Activated B cell treated with CpG ODN at 0.5 μM for 24 hours (primary cell): ENCODE measurements at regions of chr18 and their contacts with region 1.

Region 1: DNA sequence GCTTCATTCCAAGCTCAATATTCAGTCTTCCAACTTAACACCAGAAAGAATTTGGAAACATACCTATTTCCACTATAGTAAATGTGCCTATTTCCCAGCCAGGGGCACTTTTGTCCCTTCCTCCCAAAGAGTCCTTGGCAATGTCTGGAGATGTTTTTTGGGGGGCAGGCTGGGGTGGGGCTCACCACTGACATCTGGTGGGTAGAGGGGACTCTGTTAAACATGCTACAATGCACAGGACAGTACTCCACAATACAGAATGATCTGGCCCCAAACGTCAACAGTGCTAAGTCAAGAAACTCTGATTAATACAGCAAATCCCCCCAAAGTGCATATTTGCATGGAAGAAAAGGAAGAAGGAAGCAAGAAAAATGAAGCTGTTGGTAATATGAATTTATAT is 61.7 kb downstream of the SMIM21 start:
- DNase-seq: no peak
- ATAC-seq: no peak
- H3K4me3 Mint-ChIP-seq: no peak overlapping the region
- H3K27ac Mint-ChIP-seq: no peak overlapping the region
- H3K4me1 Mint-ChIP-seq: no peaks in the 10 kb centered on the region
- H3K27me3 Mint-ChIP-seq: no peaks in the 10 kb centered on the region
- CTCF ChIP-seq: no peak

Region 2: GRCh38 chr18:74896390-74896991 is 469.3 kb before region 1 on chr18:
- CTCF ChIA-PET with region 1: no interaction called
- POLR2A ChIA-PET with region 1: no interaction called
- intact Hi-C with region 1: loop called (anchors 2 kb)
- DNase-seq: no peak
- ATAC-seq: peak; percentile 31
- H3K4me3 Mint-ChIP-seq: no peak overlapping the region
- H3K27ac Mint-ChIP-seq: no peak overlapping the region
- H3K4me1 Mint-ChIP-seq: no peaks in the 10 kb centered on the region
- H3K27me3 Mint-ChIP-seq: no peaks in the 10 kb centered on the region
- CTCF ChIP-seq: no peak

Region 3: GRCh38 chr18:75173125-75173432 is 192.8 kb before region 1 on chr18:
- CTCF ChIA-PET with region 1: interaction called, 3 read pairs
- POLR2A ChIA-PET with region 1: no interaction called
- intact Hi-C with region 1: loop called (anchors 2 kb)
- DNase-seq: no peak
- ATAC-seq: peak; percentile 89
- H3K4me3 Mint-ChIP-seq: no peak overlapping the region
- H3K27ac Mint-ChIP-seq: peak overlapping the region; percentile 2
- H3K4me1 Mint-ChIP-seq: peaks cover 14% of the 10 kb centered on the region
- H3K27me3 Mint-ChIP-seq: peaks cover 5% of the 10 kb centered on the region
- CTCF ChIP-seq: no peak

Region 4: DNA sequence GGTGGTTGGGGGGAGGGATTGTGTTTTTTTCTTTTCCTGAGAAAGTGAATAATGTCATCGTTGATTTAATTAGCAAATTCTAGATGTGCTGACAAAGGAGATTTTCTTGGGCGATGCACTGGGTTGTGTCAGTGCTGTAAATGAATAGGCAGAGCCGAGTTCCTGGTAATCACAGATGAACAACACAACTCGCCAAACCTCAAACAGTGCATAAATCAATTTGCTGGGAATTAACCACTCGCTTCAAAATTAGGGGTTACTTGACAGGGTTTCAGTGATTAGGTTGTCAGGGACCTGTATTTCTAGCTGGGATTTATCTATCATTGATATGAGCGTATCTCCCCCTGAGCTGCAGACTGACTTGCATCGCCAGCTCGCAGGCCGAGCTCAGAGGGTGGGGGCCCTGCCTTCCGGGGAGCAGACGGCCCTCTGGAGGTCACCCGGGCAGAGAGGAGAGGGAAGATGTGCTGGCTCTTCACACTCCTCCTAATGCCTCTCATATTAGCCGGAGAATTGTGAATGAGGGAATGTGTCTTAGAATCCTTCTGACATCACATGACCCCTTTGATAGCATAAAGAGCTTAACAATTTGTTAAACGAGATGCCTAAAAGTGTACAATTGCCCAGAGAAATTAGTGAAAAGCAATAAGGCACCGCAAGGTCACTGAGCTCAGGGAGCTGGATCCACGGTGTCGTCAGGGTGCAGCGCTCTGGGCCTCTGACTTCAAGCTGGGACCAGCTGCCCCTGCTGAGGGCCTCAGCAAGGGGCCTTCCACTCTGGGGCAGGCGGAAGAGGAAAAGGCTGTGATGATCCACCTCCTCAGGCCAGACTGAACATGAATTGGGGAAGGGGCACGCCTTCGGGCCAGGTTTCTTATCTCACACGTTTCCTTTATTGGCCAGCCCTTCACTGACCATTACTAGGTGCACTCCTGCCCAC is 12.8 kb after region 1 on chr18:
- CTCF ChIA-PET with region 1: no interaction called
- POLR2A ChIA-PET with region 1: no interaction called
- intact Hi-C with region 1: no loop called
- DNase-seq: no peak
- ATAC-seq: no peak
- H3K4me3 Mint-ChIP-seq: no peak overlapping the region
- H3K27ac Mint-ChIP-seq: no peak overlapping the region
- H3K4me1 Mint-ChIP-seq: no peaks in the 10 kb centered on the region
- H3K27me3 Mint-ChIP-seq: peaks cover 8% of the 10 kb centered on the region
- CTCF ChIP-seq: no peak